CD4-positive, alpha-beta memory T cell (primary cell): ENCODE measurements at regions of chr12 and their contacts with region 1.

Region 1: GRCh38 chr12:64618953-64619590 is 8.8 kb downstream of the RASSF3 start:
- DNase-seq: no peak
- H3K4me3 ChIP-seq: no peak overlapping the region
- H3K4me3 Mint-ChIP-seq: peak overlapping the region; percentile 31 to 75 (median 62)
- H3K27ac ChIP-seq: no peak overlapping the region
- H3K27ac Mint-ChIP-seq: peak overlapping the region; percentile 58 to 88 (median 73)
- H3K4me1 ChIP-seq: peaks cover 96% of the 10 kb centered on the region
- H3K4me1 Mint-ChIP-seq: peaks cover 49 to 89% (median 66%) of the 10 kb centered on the region in 4 donors
- H3K27me3 ChIP-seq: no peaks in the 10 kb centered on the region
- H3K27me3 Mint-ChIP-seq: no peaks in the 10 kb centered on the region

Region 2: DNA sequence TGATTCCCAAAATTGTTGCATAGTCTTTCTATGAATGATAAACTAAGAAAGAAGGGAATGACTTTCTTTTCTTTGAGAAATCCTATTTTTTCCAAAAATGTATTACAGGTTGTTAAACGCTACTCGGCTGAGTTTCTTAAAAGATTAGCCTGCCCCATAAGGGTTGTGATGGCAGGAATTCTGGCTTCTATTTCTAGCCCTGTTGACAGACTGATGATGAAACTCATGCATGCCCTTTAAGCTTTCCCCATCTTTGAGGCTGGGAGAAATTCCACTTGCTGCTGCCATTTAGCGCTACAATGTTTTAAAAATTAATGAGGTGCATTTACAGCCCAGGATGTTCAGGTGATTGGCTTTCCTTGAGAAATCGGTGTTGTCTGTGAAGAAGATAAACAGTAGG is 42.0 kb before region 1 on chr12:
- CTCF ChIA-PET with region 1: no interaction called
- POLR2A ChIA-PET with region 1: no interaction called
- intact Hi-C with region 1: no loop called
- DNase-seq: no peak
- H3K4me3 ChIP-seq: no peak overlapping the region
- H3K4me3 Mint-ChIP-seq: no peak overlapping the region
- H3K27ac ChIP-seq: no peak overlapping the region
- H3K27ac Mint-ChIP-seq: no peak overlapping the region
- H3K4me1 ChIP-seq: no peaks in the 10 kb centered on the region
- H3K4me1 Mint-ChIP-seq: peaks cover 0 to 5% (median 2%) of the 10 kb centered on the region in 4 donors
- H3K27me3 ChIP-seq: no peaks in the 10 kb centered on the region
- H3K27me3 Mint-ChIP-seq: no peaks in the 10 kb centered on the region

Region 3: GRCh38 chr12:64587447-64587846 is 31.6 kb before region 1 on chr12:
- CTCF ChIA-PET with region 1: no interaction called
- POLR2A ChIA-PET with region 1: no interaction called
- intact Hi-C with region 1: no loop called
- DNase-seq: no peak
- H3K4me3 ChIP-seq: no peak overlapping the region
- H3K4me3 Mint-ChIP-seq: no peak overlapping the region
- H3K27ac ChIP-seq: no peak overlapping the region
- H3K27ac Mint-ChIP-seq: no peak overlapping the region
- H3K4me1 ChIP-seq: peaks cover 33% of the 10 kb centered on the region
- H3K4me1 Mint-ChIP-seq: peaks cover 19 to 38% (median 28%) of the 10 kb centered on the region in 4 donors
- H3K27me3 ChIP-seq: no peaks in the 10 kb centered on the region
- H3K27me3 Mint-ChIP-seq: no peaks in the 10 kb centered on the region

Region 4: DNA sequence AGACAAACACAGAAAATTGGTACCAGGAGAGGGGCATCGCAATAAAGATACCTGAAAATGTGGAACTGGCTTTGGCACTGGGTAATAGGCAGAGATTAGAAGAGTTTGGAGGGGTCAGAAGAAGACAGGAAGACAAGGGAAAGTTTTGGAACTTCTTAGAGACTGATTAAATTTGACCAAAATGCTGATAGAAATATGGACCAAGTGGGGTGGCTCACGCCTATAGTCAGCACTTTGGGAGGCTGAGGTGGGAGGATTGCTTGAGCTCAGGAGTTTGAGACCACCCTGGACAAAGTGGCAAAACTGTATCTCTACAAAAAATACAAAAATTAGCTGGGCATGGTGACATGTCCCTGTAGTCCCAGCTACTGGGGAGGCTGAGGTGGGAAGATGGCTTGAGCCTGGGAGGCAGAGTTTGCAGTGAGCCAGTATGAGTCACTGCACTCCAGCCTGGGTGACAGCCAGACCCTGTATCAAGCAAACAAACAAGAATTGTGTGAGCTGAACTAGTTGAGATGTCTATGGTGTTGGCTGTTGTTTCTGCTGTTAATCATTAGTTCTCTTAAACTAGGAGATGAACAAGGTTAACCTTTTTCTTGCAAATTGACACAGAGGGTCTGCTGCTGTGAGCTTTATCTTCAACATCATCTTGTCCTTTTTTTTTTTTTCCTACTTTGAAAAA is 14.7 kb after region 1 on chr12:
- CTCF ChIA-PET with region 1: interaction called, 3 read pairs
- POLR2A ChIA-PET with region 1: interaction called, 4 read pairs
- intact Hi-C with region 1: loop called (anchors 2 kb)
- DNase-seq: peak in 1 of 5 donors; percentile 47
- H3K4me3 ChIP-seq: no peak overlapping the region
- H3K4me3 Mint-ChIP-seq: peak overlapping the region in 7 of 8 donors; percentile 5 to 73 (median 30)
- H3K27ac ChIP-seq: no peak overlapping the region
- H3K27ac Mint-ChIP-seq: peak overlapping the region; percentile 29 to 88 (median 77)
- H3K4me1 ChIP-seq: peaks cover 92% of the 10 kb centered on the region
- H3K4me1 Mint-ChIP-seq: peaks cover 60 to 92% (median 72%) of the 10 kb centered on the region in 4 donors
- H3K27me3 ChIP-seq: no peaks in the 10 kb centered on the region
- H3K27me3 Mint-ChIP-seq: no peaks in the 10 kb centered on the region